GM12878 (cell line): ENCODE measurements at regions of chr17 and their contacts with region 1.

Region 1: DNA sequence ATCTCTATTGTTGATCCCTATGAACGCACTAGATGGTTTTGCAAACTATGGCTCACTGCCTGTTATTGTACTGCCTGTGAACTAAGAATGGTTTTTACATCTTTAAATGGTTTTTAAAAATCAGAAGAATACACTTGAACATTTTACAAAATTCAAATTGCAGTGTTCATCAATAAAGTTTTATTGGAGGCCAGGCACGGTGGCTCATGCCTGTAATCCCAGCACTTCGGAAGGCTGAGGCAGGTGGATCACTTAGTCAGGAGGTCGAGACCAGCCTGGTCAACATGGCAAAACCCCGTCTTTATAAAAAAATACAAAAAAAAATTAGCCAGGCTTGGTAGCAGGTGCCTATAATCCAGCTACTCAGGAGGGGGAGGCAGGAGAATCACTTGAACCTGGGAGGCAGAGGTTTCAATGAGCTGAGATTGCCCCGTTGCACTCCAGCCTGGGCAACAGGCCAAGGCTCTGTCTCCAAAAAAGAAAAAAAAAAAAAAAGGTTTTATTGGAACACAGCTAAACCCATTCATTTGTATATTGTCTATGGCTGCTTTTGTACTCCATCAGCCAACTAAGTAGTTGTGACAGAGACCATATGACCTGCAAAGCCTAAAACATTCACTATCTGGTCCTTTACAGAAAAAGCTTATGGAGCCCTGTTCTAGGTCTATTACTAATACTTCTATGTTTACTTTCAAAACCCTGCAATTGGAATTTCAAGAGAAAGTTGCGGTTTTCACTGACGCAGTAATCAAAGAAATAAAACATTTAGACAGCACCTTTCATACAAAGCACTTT is 18.9 kb downstream of the IKZF3 start:
- DNase-seq: no peak
- ATAC-seq: peak; percentile 23; the same call in 2 of the 3 replicates
- H3K4me3 ChIP-seq: 0 out of 2 replicates have a peak overlapping the region, but pooled peaks have one; percentile 31
- H3K27ac ChIP-seq: peak overlapping the region; percentile 40
- H3K4me1 ChIP-seq: peaks cover 58% of the 10 kb centered on the region
- H3K27me3 ChIP-seq: no peaks in the 10 kb centered on the region
- CTCF ChIP-seq: no peak
- EP300 ChIP-seq: no peak
- POLR2A ChIP-seq: no peak
- RAD21 ChIP-seq: no peak

Region 2: DNA sequence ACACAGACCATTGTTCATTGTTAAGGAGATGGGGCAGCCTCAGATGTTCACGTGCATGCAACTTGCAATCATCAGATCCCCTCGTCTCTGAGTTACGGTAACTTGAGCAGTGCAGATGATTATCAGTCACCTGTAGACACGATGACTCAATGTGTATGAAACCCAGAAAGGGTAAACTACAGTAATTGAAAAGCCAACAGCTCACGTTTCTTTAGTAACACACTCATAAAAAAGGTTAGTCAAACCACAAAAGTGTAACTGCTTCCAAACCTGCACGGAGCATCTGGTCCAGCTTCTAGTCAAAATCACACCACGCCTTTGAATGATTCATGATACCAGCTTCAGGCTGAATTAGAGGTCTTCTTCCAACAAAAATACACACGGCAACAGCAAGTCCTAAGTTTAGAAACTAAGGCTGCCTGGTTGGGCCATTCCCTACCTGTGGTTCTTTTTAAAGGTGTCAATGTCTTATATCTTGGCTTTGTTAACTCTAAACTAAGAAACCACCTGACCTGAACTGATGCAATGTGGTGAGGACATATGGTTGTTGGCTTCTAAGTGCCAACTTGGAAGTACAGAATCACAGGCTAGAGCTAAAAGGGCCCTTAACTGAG is 75.2 kb before region 1 on chr17:
- CTCF ChIA-PET with region 1: no interaction called
- POLR2A ChIA-PET with region 1: interaction called, 3 read pairs
- RAD21 ChIA-PET with region 1: interaction called, 3 read pairs
- SMC1A ChIA-PET with region 1: interaction called, 9 read pairs
- in situ Hi-C with region 1: no loop called
- intact Hi-C with region 1: loop called (anchors 5 kb)
- DNase-seq: peak; percentile 84
- ATAC-seq: peak; percentile 81
- H3K4me3 ChIP-seq: peak overlapping the region; percentile 79; the same call in 1 of the 2 replicates
- H3K27ac ChIP-seq: peak overlapping the region; percentile 95
- H3K4me1 ChIP-seq: peaks cover 85% of the 10 kb centered on the region
- H3K27me3 ChIP-seq: no peaks in the 10 kb centered on the region
- CTCF ChIP-seq: no peak
- EP300 ChIP-seq: peak; percentile 76 to 92
- POLR2A ChIP-seq: no peak; the same call in 1 of the 2 replicates
- RAD21 ChIP-seq: no peak

Region 3: DNA sequence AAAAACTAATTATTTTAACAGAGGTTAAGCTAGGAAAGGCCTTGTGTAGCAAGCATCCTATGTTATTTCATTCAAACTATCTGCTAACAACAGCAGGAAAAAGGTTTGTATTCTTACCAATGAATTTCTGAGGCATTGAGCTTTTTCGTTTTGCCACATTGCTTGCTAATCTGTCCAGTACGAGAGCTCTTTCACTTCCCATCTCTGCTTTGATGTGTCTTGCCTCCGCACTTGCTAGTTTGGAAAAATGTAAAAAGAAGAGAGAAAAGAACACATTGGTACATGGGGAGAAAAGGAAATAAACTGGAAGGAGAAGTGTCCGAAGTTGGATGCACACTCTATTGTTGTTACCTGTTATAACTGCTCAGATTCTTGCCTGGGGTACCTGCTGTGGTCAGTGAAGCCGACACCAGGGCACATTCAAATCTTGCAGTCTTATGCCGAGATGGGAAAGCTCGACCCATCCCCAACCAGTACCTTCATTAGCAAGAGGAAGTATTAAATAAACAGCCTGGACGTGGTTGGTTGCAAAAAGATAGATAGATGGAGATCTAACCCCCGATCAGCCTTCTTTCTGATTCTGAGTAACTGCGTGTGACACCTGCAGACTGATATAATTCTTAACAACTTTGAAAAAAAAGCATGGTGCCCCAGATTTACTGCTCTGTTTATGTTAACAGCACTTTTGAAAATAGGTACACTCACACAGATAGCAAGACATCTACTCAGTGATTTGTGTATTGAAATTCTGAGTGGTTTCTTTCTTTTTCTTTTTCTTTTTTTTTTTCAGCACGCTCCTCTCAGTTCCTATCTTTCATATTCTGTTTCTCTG is 67.5 kb before region 1 on chr17:
- CTCF ChIA-PET with region 1: interaction called, 6 read pairs
- POLR2A ChIA-PET with region 1: interaction called, 3 read pairs
- RAD21 ChIA-PET with region 1: interaction called, 4 read pairs
- SMC1A ChIA-PET with region 1: interaction called, 11 read pairs
- in situ Hi-C with region 1: no loop called
- intact Hi-C with region 1: loop called (anchors 5 kb)
- DNase-seq: peak; percentile 73
- ATAC-seq: peak; percentile 68
- H3K4me3 ChIP-seq: peak overlapping the region; percentile 79
- H3K27ac ChIP-seq: peak overlapping the region; percentile 95
- H3K4me1 ChIP-seq: peaks cover 44% of the 10 kb centered on the region
- H3K27me3 ChIP-seq: no peaks in the 10 kb centered on the region
- CTCF ChIP-seq: no peak
- EP300 ChIP-seq: peak; percentile 40 to 58; a peak in 2 of 4 replicates
- POLR2A ChIP-seq: peak; percentile 43; the same call in 1 of the 2 replicates
- RAD21 ChIP-seq: no peak

Region 4: DNA sequence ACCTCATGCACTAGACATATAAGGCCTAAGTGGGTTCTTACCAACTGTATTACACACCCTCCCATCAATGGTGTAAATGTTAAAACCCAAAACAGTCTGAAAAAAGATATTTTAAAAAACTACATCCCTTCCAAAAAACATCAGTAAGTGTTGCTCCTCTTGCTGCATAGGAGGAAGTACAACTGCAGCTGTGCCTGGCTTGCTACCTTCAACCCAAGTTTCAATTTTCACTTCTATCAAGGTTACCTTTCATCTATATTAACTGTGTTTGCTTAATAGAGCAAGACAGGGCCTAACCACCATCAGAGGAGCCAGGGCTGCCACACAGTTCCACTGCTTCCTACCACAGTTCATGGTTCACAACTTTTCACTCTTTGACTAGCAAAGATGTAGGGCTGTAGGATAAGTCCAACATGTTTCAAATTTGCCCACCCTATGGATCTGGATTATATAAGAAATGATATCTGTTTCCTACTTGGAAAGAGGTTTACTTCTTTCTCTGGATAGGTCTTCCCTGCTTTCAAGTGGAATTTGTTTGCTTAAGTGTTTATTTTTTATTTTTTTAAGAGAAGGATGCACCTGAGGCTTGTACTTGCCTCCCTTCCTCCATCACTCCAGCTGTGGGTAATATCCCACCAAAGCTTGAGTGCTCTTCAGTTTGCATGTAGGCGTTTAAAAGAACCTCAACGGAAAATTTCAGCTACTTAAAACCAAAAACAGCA is 50.8 kb before region 1 on chr17:
- CTCF ChIA-PET with region 1: interaction called, 3 read pairs
- POLR2A ChIA-PET with region 1: interaction called, 3 read pairs
- RAD21 ChIA-PET with region 1: interaction called, 11 read pairs
- SMC1A ChIA-PET with region 1: interaction called, 10 read pairs
- in situ Hi-C with region 1: no loop called
- intact Hi-C with region 1: no loop called
- DNase-seq: peak; percentile 95
- ATAC-seq: peak; percentile 98
- H3K4me3 ChIP-seq: peak overlapping the region; percentile 50
- H3K27ac ChIP-seq: peak overlapping the region; percentile 93
- H3K4me1 ChIP-seq: peaks cover 63% of the 10 kb centered on the region
- H3K27me3 ChIP-seq: no peaks in the 10 kb centered on the region
- CTCF ChIP-seq: no peak
- EP300 ChIP-seq: peak; percentile 46 to 76; a peak in 3 of 4 replicates
- POLR2A ChIP-seq: peak; percentile 53; the same call in 1 of the 2 replicates
- RAD21 ChIP-seq: 0 out of 2 replicates have a peak, but pooled peaks have one; percentile 2

Region 5: GRCh38 chr17:39822051-39822451 is 23.2 kb before region 1 on chr17:
- CTCF ChIA-PET with region 1: interaction called, 3 read pairs
- POLR2A ChIA-PET with region 1: interaction called, 8 read pairs
- RAD21 ChIA-PET with region 1: interaction called, 8 read pairs
- SMC1A ChIA-PET with region 1: interaction called, 13 read pairs
- in situ Hi-C with region 1: no loop called
- intact Hi-C with region 1: no loop called
- DNase-seq: no peak
- ATAC-seq: peak; percentile 25
- H3K4me3 ChIP-seq: no peak overlapping the region
- H3K27ac ChIP-seq: peak overlapping the region; percentile 65
- H3K4me1 ChIP-seq: peaks cover 42% of the 10 kb centered on the region
- H3K27me3 ChIP-seq: no peaks in the 10 kb centered on the region
- CTCF ChIP-seq: no peak
- EP300 ChIP-seq: no peak
- POLR2A ChIP-seq: no peak
- RAD21 ChIP-seq: no peak

Region 6: GRCh38 chr17:39835038-39835786 is 10.0 kb before region 1 on chr17:
- CTCF ChIA-PET with region 1: interaction called, 10 read pairs
- POLR2A ChIA-PET with region 1: interaction called, 6 read pairs
- RAD21 ChIA-PET with region 1: interaction called, 4 read pairs
- SMC1A ChIA-PET with region 1: interaction called, 16 read pairs
- in situ Hi-C with region 1: no loop called
- intact Hi-C with region 1: no loop called
- DNase-seq: no peak
- ATAC-seq: peak; percentile 28
- H3K4me3 ChIP-seq: no peak overlapping the region
- H3K27ac ChIP-seq: no peak overlapping the region
- H3K4me1 ChIP-seq: no peaks in the 10 kb centered on the region; the same call in 1 of the 2 replicates
- H3K27me3 ChIP-seq: no peaks in the 10 kb centered on the region
- CTCF ChIP-seq: no peak
- EP300 ChIP-seq: no peak
- POLR2A ChIP-seq: peak; percentile 45
- RAD21 ChIP-seq: no peak